CD8-positive, alpha-beta T cell (primary cell): ENCODE measurements at regions of chr19 and their contacts with region 1.

Region 1: DNA sequence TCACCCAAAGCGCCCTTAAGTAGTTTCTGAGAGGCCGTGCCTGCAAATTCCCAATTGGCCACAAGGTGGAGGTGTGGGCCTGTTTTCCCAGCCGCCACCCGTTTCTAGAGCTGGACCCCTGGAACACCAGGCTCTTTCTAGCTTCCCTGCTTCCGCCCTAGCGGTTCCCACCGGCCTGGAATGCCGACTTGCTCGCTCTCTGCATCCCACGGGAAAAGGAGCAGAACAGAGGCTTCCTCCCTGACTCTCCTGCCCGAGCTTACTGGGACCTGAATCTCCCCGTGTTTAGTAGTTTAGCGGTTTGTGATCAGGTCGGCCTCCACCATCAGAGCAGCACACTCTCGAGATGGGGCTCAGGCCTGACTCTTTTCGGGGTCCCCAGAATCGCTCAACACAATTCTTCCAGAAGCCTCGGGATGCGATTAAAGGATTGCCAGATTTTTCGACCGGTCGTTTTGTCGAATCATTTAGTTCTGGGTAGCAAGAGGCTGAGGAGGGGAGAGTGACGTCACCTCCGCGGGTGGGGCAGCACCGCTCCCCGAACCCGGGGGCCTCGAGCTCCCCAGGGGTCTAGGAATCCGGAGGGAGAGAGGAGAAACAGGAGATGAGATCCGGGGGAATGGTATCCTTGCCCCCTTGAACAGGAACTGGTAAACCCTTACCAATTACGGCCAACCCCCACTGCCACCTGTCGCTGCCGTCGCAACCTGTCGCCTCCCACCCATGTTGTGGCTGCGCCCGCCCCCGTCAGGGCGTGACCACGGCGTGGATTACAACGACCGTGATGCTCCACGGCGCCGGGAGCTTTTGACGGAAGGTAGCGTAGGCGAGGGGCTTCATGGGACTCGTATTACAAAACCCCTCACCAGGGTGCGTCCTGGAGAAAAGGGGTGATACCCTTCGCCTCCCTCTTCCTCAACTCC is 8.0 kb downstream of the NAPSA start:
- DNase-seq: peak; percentile 73 to 94 (median 90)
- ATAC-seq: peak; percentile 83
- H3K4me3 ChIP-seq: peak overlapping the region; percentile 62 to 78
- H3K4me3 Mint-ChIP-seq: peak overlapping the region; percentile 89
- H3K27ac ChIP-seq: peak overlapping the region; percentile 90 to 96
- H3K27ac Mint-ChIP-seq: peak overlapping the region; percentile 96
- H3K4me1 ChIP-seq: peaks cover 20% of the 10 kb centered on the region
- H3K4me1 Mint-ChIP-seq: peaks cover 30% of the 10 kb centered on the region
- H3K27me3 ChIP-seq: no peaks in the 10 kb centered on the region
- H3K27me3 Mint-ChIP-seq: peaks cover 3% of the 10 kb centered on the region
- CTCF ChIP-seq: peak; percentile 85

Region 2: DNA sequence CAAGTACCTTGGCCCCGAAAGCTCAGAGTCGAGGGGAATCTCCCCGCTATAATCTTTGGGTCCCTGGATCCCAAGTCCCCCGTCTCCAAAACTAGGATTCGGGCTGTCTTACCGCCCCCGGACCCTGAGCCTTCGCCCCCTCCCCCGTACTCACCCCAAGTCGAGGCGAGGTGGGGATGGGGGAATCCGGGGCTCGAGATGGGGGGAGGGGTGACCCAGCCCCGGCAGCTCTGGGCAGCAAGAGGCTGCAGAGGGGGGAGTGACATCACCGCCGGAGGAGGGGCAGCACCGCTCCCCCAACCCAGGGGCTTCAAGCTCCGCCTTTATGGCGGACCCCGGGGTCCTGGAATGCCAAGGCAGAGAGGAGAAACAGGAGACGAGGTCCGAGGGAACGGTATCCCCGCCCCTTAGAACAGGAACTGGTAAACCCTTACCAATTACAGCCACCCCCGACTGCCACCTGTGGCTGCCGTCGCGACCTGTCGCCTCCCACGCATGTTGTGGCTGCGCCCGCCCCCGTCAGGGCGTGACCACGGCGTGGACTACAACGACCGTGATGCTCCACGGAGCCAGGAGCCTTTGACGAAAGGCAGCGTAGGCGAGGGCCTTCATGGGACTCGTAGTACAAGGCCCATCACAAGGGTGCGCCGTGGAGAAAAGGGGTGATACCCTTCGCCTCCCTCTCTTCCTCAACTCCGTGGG is 24.3 kb before region 1 on chr19:
- CTCF ChIA-PET with region 1: interaction called, 5 read pairs
- POLR2A ChIA-PET with region 1: no interaction called
- intact Hi-C with region 1: loop called in 1 of 2 experiments (anchors 2 kb)
- DNase-seq: peak; percentile 71 to 93 (median 88)
- ATAC-seq: peak; percentile 74
- H3K4me3 ChIP-seq: peak overlapping the region; percentile 58 to 77
- H3K4me3 Mint-ChIP-seq: peak overlapping the region; percentile 85
- H3K27ac ChIP-seq: no peak overlapping the region
- H3K27ac Mint-ChIP-seq: peak overlapping the region; percentile 24
- H3K4me1 ChIP-seq: peaks cover 48% of the 10 kb centered on the region
- H3K4me1 Mint-ChIP-seq: peaks cover 47% of the 10 kb centered on the region
- H3K27me3 ChIP-seq: peaks cover 27 to 39% of the 10 kb centered on the region in 2 experiments
- H3K27me3 Mint-ChIP-seq: peaks cover 57% of the 10 kb centered on the region
- CTCF ChIP-seq: no peak

Region 3: GRCh38 chr19:50376166-50377050 is 19.0 kb after region 1 on chr19 and contains the start of gene NR1H2:
- CTCF ChIA-PET with region 1: interaction called, 44 read pairs
- POLR2A ChIA-PET with region 1: interaction called, 14 read pairs
- intact Hi-C with region 1: loop called (anchors 1 kb)
- DNase-seq: peak; percentile 89 to 99 (median 95)
- ATAC-seq: peak; percentile 90
- H3K4me3 ChIP-seq: peak within 1 kb of the TSS; percentile 73 to 93
- H3K4me3 Mint-ChIP-seq: peak within 1 kb of the TSS; percentile 99
- H3K27ac ChIP-seq: peak within 1 kb of the TSS; percentile 99 to 100
- H3K27ac Mint-ChIP-seq: peak within 1 kb of the TSS; percentile 100
- H3K4me1 ChIP-seq: peaks cover 11% of the 10 kb centered on the region
- H3K4me1 Mint-ChIP-seq: peaks cover 22% of the 10 kb centered on the region
- H3K27me3 ChIP-seq: no peaks in the 10 kb centered on the region
- H3K27me3 Mint-ChIP-seq: no peaks in the 10 kb centered on the region
- CTCF ChIP-seq: no peak
- total RNA-seq, gene NR1H2: 320 to 327 TPM

Region 4: GRCh38 chr19:50414864-50415660 is 57.6 kb after region 1 on chr19:
- CTCF ChIA-PET with region 1: interaction called, 11 read pairs
- POLR2A ChIA-PET with region 1: interaction called, 3 read pairs
- intact Hi-C with region 1: loop called (anchors 1 kb)
- DNase-seq: peak; percentile 48 to 82 (median 73)
- ATAC-seq: peak; percentile 90
- H3K4me3 ChIP-seq: no peak overlapping the region
- H3K4me3 Mint-ChIP-seq: no peak overlapping the region
- H3K27ac ChIP-seq: no peak overlapping the region
- H3K27ac Mint-ChIP-seq: no peak overlapping the region
- H3K4me1 ChIP-seq: no peaks in the 10 kb centered on the region
- H3K4me1 Mint-ChIP-seq: peaks cover 5% of the 10 kb centered on the region
- H3K27me3 ChIP-seq: no peaks in the 10 kb centered on the region
- H3K27me3 Mint-ChIP-seq: peaks cover 12% of the 10 kb centered on the region
- CTCF ChIP-seq: peak; percentile 67

Region 5: GRCh38 chr19:50444062-50444461 is 86.6 kb after region 1 on chr19:
- CTCF ChIA-PET with region 1: no interaction called
- POLR2A ChIA-PET with region 1: no interaction called
- intact Hi-C with region 1: no loop called
- DNase-seq: no peak
- ATAC-seq: no peak
- H3K4me3 ChIP-seq: no peak overlapping the region
- H3K4me3 Mint-ChIP-seq: no peak overlapping the region
- H3K27ac ChIP-seq: no peak overlapping the region
- H3K27ac Mint-ChIP-seq: no peak overlapping the region
- H3K4me1 ChIP-seq: no peaks in the 10 kb centered on the region
- H3K4me1 Mint-ChIP-seq: no peaks in the 10 kb centered on the region
- H3K27me3 ChIP-seq: no peaks in the 10 kb centered on the region
- H3K27me3 Mint-ChIP-seq: peaks cover 21% of the 10 kb centered on the region
- CTCF ChIP-seq: no peak

Region 6: GRCh38 chr19:50461066-50461875 is 103.8 kb after region 1 on chr19:
- CTCF ChIA-PET with region 1: interaction called, 23 read pairs
- POLR2A ChIA-PET with region 1: no interaction called
- intact Hi-C with region 1: loop called (anchors 1 kb)
- DNase-seq: peak; percentile 33 to 77 (median 55)
- ATAC-seq: peak; percentile 94
- H3K4me3 ChIP-seq: no peak overlapping the region
- H3K4me3 Mint-ChIP-seq: no peak overlapping the region
- H3K27ac ChIP-seq: no peak overlapping the region
- H3K27ac Mint-ChIP-seq: no peak overlapping the region
- H3K4me1 ChIP-seq: no peaks in the 10 kb centered on the region
- H3K4me1 Mint-ChIP-seq: no peaks in the 10 kb centered on the region
- H3K27me3 ChIP-seq: peaks cover 0 to 10% of the 10 kb centered on the region in 2 experiments
- H3K27me3 Mint-ChIP-seq: peaks cover 36% of the 10 kb centered on the region
- CTCF ChIP-seq: peak; percentile 81

Region 7: GRCh38 chr19:50556282-50557008 is 199.0 kb after region 1 on chr19:
- CTCF ChIA-PET with region 1: interaction called, 7 read pairs
- POLR2A ChIA-PET with region 1: no interaction called
- intact Hi-C with region 1: loop called in 1 of 2 experiments (anchors 2 kb)
- DNase-seq: peak; percentile 53 to 82 (median 74)
- ATAC-seq: peak; percentile 73
- H3K4me3 ChIP-seq: peak overlapping the region; percentile 46 to 81
- H3K4me3 Mint-ChIP-seq: peak overlapping the region; percentile 87
- H3K27ac ChIP-seq: no peak overlapping the region
- H3K27ac Mint-ChIP-seq: no peak overlapping the region
- H3K4me1 ChIP-seq: peaks cover 8% of the 10 kb centered on the region
- H3K4me1 Mint-ChIP-seq: peaks cover 10% of the 10 kb centered on the region
- H3K27me3 ChIP-seq: peaks cover 13 to 17% of the 10 kb centered on the region in 2 experiments
- H3K27me3 Mint-ChIP-seq: peaks cover 60% of the 10 kb centered on the region
- CTCF ChIP-seq: peak; percentile 90

Region 8: GRCh38 chr19:50804420-50805272 is 447.2 kb after region 1 on chr19:
- CTCF ChIA-PET with region 1: no interaction called
- POLR2A ChIA-PET with region 1: interaction called, 3 read pairs
- intact Hi-C with region 1: loop called in 1 of 2 experiments (anchors 1 kb)
- DNase-seq: peak; percentile 91 to 99 (median 96)
- ATAC-seq: peak; percentile 95
- H3K4me3 ChIP-seq: peak overlapping the region; percentile 91 to 96
- H3K4me3 Mint-ChIP-seq: peak overlapping the region; percentile 98
- H3K27ac ChIP-seq: peak overlapping the region; percentile 99
- H3K27ac Mint-ChIP-seq: peak overlapping the region; percentile 100
- H3K4me1 ChIP-seq: peaks cover 18% of the 10 kb centered on the region
- H3K4me1 Mint-ChIP-seq: peaks cover 43% of the 10 kb centered on the region
- H3K27me3 ChIP-seq: no peaks in the 10 kb centered on the region
- H3K27me3 Mint-ChIP-seq: no peaks in the 10 kb centered on the region
- CTCF ChIP-seq: no peak